Caco-2 (cell line): ENCODE measurements at regions of chr6 and their contacts with region 1.

Region 1: DNA sequence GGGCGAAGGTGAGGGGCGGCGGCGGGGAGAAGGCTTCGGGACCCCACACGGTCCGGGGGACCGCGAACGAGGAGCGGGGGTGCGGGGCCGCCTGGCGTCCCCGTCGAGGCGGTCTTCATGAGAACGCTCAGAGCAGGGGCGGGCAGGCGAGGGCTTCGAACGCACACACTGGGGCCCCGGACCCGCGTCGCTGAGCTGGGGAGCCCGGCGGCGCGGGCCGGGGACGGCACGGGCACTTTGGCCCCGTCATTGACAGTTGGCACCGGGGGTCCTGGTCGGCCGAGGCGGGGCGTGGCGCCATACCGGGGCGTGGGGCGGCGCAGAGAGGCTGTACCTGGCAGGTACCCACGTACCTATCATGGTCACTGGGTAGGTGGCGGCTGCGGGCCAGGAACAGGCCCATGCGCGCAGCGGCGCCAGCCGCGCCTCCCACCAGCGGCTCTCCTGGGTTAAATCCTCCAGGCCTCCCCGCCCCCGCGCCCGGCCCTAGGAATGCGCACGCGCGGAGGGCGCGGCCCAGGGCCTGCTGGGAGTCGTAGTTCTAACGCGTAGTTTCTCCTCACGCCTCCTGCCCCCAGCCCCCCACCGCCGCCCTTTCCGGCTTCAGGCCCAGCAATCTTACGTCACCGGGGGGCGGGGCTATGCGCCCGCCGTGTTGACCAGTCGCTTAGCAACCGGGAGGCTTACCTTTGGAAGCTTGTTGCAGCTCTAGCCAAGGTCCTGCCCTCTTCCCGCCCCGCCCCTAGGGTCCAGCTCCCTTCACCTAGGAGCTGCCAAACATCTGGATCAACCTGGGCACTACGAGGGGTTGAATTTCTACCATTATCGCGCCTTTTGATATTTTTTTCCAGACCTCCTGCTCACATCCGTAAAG is at the starts of genes PACRG and PRKN:
- DNase-seq: peak; percentile 98 to 99
- H3K4me3 ChIP-seq: peak within 1 kb of the TSS; percentile 94
- H3K4me3 Mint-ChIP-seq: peak within 1 kb of the TSS; percentile 88
- H3K27ac Mint-ChIP-seq: peak within 1 kb of the TSS; percentile 89
- H3K4me1 ChIP-seq: no peaks in the 10 kb centered on the region
- H3K4me1 Mint-ChIP-seq: no peaks in the 10 kb centered on the region
- H3K27me3 ChIP-seq: no peaks in the 10 kb centered on the region
- H3K27me3 Mint-ChIP-seq: no peaks in the 10 kb centered on the region
- CTCF ChIP-seq: no peak
- total RNA-seq, gene PACRG: not detected in 2 replicates
- total RNA-seq, gene PRKN: 0.34 TPM in 1 of 2 replicates, not detected in the other

Region 2: GRCh38 chr6:162681447-162681846 is 46.1 kb before region 1 on chr6:
- CTCF ChIA-PET with region 1: no interaction called
- POLR2A ChIA-PET with region 1: no interaction called
- intact Hi-C with region 1: loop called (anchors 1 kb)
- DNase-seq: peak in 1 of 2 experiments; percentile 26
- H3K4me3 ChIP-seq: no peak overlapping the region
- H3K4me3 Mint-ChIP-seq: no peak overlapping the region
- H3K27ac Mint-ChIP-seq: no peak overlapping the region
- H3K4me1 ChIP-seq: peaks cover 9% of the 10 kb centered on the region
- H3K4me1 Mint-ChIP-seq: no peaks in the 10 kb centered on the region
- H3K27me3 ChIP-seq: no peaks in the 10 kb centered on the region
- H3K27me3 Mint-ChIP-seq: no peaks in the 10 kb centered on the region
- CTCF ChIP-seq: no peak